ENCODE measurements at regions of chr7 and their contacts with region 1.

Region 1: GRCh38 chr7:8035647-8036518 is 67.3 kb downstream of the GLCCI1 start:
- DNase-seq: peak; percentile 44
- ATAC-seq: peak; percentile 99
- H3K4me3 ChIP-seq: no peak overlapping the region
- H3K27ac ChIP-seq: no peak overlapping the region
- H3K4me1 ChIP-seq: no peaks in the 10 kb centered on the region
- H3K27me3 ChIP-seq: no peaks in the 10 kb centered on the region
- CTCF ChIP-seq: peak; percentile 78
- EP300 ChIP-seq: no peak
- POLR2A ChIP-seq: no peak
- RAD21 ChIP-seq: 0 out of 2 replicates have a peak, but pooled peaks have one; percentile 25

Region 2: DNA sequence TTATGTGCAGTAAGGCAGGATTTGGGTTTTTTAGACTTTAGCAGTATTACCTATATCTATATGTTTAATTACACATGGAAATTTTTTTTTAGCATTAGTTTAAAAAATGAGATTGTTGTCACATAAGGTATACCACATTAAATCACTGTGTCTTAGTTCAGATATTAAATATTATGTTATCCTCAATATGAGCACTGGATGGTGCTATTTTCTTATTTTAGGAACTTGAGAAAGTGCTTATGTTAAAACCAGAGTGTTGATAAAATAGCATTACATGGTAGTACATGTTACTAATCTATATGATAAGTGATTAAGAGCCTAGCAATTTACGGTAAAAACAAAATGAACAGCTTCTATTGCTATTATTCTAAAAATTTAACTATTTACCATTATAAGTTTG is 440.4 kb before region 1 on chr7:
- CTCF ChIA-PET with region 1: no interaction called
- POLR2A ChIA-PET with region 1: no interaction called
- in situ Hi-C with region 1: no loop called
- intact Hi-C with region 1: loop called (anchors 10 kb)
- DNase-seq: peak; percentile 3
- ATAC-seq: no peak
- H3K4me3 ChIP-seq: no peak overlapping the region
- H3K27ac ChIP-seq: no peak overlapping the region
- H3K4me1 ChIP-seq: peaks cover 8% of the 10 kb centered on the region
- H3K27me3 ChIP-seq: no peaks in the 10 kb centered on the region
- CTCF ChIP-seq: peak; percentile 26; the same call in 1 of the 2 replicates
- EP300 ChIP-seq: no peak
- POLR2A ChIP-seq: no peak
- RAD21 ChIP-seq: no peak

Region 3: GRCh38 chr7:7681179-7681935 is 354.5 kb before region 1 on chr7:
- CTCF ChIA-PET with region 1: interaction called, 3 read pairs
- POLR2A ChIA-PET with region 1: no interaction called
- in situ Hi-C with region 1: no loop called
- intact Hi-C with region 1: loop called (anchors 5 kb)
- DNase-seq: peak; percentile 50
- ATAC-seq: peak; percentile 66
- H3K4me3 ChIP-seq: no peak overlapping the region
- H3K27ac ChIP-seq: no peak overlapping the region
- H3K4me1 ChIP-seq: no peaks in the 10 kb centered on the region
- H3K27me3 ChIP-seq: no peaks in the 10 kb centered on the region
- CTCF ChIP-seq: peak; percentile 64
- EP300 ChIP-seq: no peak
- POLR2A ChIP-seq: no peak
- RAD21 ChIP-seq: 0 out of 2 replicates have a peak, but pooled peaks have one; percentile 35

Region 4: DNA sequence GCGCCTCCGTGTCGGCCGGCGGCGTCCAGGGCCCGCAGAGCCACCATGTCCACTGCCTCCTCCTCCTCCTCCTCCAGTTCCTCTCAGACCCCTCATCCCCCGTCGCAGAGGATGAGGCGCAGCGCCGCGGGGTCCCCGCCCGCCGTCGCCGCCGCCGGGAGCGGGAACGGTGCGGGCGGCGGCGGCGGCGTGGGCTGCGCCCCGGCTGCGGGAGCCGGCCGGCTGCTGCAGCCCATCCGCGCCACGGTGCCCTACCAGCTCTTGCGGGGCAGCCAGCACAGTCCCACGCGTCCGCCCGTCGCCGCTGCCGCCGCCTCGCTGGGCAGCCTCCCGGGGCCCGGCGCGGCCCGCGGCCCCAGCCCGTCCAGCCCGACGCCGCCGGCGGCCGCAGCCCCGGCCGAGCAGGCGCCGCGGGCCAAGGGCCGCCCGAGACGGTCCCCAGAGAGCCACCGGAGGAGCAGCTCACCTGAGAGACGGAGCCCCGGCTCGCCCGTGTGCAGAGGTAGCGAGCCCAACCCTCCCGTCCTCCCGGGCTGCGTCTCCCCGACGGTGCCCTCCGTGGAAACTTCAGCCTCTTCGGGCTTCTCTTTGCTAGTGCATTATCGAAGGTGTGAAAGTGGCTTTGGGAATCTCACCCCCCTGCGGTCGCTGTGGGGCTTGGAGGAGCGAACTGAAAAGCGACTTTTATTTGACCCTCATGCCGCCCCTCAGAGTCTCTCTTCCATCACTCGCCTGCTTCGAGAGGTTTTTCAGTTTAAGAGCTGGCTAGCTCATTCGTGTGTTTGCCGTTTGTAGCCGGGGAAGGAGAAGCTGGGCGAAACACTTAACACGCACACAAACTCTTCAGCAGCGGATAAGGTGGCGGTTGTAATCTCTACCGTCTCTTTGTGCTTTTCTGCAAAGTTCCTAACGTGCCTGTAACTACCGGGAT is 66.3 kb before region 1 on chr7:
- CTCF ChIA-PET with region 1: no interaction called
- POLR2A ChIA-PET with region 1: no interaction called
- in situ Hi-C with region 1: no loop called
- intact Hi-C with region 1: loop called (anchors 1 kb)
- DNase-seq: no peak
- ATAC-seq: peak; percentile 27
- H3K4me3 ChIP-seq: peak overlapping the region; percentile 69 to 86 (median 78)
- H3K27ac ChIP-seq: peak overlapping the region; percentile 56
- H3K4me1 ChIP-seq: peaks cover 31% of the 10 kb centered on the region
- H3K27me3 ChIP-seq: peaks cover 0 to 5% of the 10 kb centered on the region in 2 experiments; a peak in 1 of 5 replicates
- CTCF ChIP-seq: 0 out of 2 replicates have a peak, but pooled peaks have one; percentile 5
- EP300 ChIP-seq: no peak
- POLR2A ChIP-seq: no peak
- RAD21 ChIP-seq: no peak

Region 5: GRCh38 chr7:8190119-8190895 is 154.4 kb after region 1 on chr7:
- CTCF ChIA-PET with region 1: no interaction called
- POLR2A ChIA-PET with region 1: no interaction called
- in situ Hi-C with region 1: no loop called
- intact Hi-C with region 1: loop called (anchors 10 kb)
- DNase-seq: peak; percentile 44
- ATAC-seq: peak; percentile 85
- H3K4me3 ChIP-seq: no peak overlapping the region
- H3K27ac ChIP-seq: no peak overlapping the region
- H3K4me1 ChIP-seq: no peaks in the 10 kb centered on the region; the same call in 1 of the 2 replicates
- H3K27me3 ChIP-seq: no peaks in the 10 kb centered on the region
- CTCF ChIP-seq: peak; percentile 73
- EP300 ChIP-seq: no peak
- POLR2A ChIP-seq: no peak
- RAD21 ChIP-seq: no peak